ENCODE measurements at regions of chr1 and their contacts with region 1.

Region 1: DNA sequence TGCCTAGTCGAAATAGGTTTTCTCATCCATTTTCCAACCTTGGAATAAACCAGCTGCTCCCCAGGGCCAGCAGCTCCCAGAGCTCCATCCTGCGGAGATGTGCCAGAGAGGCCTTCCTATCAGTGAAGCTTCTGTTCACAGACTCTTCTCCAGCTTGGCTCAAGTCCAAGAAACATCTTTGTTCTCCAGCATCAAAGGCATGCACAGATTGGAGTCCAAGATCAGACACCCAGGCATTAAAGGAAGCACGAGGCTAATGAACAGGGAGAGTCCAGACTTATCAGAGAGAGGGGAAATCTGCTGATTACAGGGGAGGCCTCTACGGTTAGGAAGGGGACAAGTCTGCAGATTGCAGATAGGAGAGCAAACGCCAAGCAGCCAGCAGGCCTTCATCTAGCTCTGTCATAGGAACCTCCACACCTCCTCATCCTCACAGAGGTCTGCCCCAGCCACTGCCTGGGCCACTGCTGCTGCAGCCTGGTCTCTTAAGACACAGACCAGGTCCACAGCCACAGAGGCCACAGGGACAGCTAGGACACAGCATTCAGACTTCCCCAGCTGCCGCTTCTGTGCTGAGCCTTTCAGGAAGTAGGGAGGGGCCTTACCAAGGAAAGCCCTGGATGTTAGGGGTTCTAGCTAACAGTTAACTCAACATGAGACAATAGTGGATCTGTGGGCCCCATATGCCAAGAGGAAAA is 3.4 kb downstream of the PRR9 start:
- DNase-seq: no peak
- ATAC-seq: no peak
- H3K4me3 ChIP-seq: no peak overlapping the region
- H3K4me3 Mint-ChIP-seq: no peak overlapping the region
- H3K27ac ChIP-seq: no peak overlapping the region
- H3K27ac Mint-ChIP-seq: no peak overlapping the region
- H3K4me1 ChIP-seq: no peaks in the 10 kb centered on the region
- H3K4me1 Mint-ChIP-seq: no peaks in the 10 kb centered on the region
- H3K27me3 ChIP-seq: no peaks in the 10 kb centered on the region
- H3K27me3 Mint-ChIP-seq: peaks cover 22% of the 10 kb centered on the region
- CTCF ChIP-seq: no peak

Region 2: GRCh38 chr1:152654110-152654509 is 566.6 kb before region 1 on chr1:
- CTCF ChIA-PET with region 1: no interaction called
- POLR2A ChIA-PET with region 1: no interaction called
- intact Hi-C with region 1: loop called in 1 of 2 experiments (anchors 5 kb)
- DNase-seq: peak in 6 of 9 experiments; percentile 3 to 52 (median 29)
- ATAC-seq: no peak
- H3K4me3 ChIP-seq: no peak overlapping the region
- H3K4me3 Mint-ChIP-seq: no peak overlapping the region
- H3K27ac ChIP-seq: no peak overlapping the region
- H3K27ac Mint-ChIP-seq: no peak overlapping the region
- H3K4me1 ChIP-seq: no peaks in the 10 kb centered on the region
- H3K4me1 Mint-ChIP-seq: peaks cover 2% of the 10 kb centered on the region
- H3K27me3 ChIP-seq: peaks cover 0 to 2% of the 10 kb centered on the region in 2 experiments
- H3K27me3 Mint-ChIP-seq: peaks cover 14% of the 10 kb centered on the region
- CTCF ChIP-seq: peak; percentile 37

Region 3: DNA sequence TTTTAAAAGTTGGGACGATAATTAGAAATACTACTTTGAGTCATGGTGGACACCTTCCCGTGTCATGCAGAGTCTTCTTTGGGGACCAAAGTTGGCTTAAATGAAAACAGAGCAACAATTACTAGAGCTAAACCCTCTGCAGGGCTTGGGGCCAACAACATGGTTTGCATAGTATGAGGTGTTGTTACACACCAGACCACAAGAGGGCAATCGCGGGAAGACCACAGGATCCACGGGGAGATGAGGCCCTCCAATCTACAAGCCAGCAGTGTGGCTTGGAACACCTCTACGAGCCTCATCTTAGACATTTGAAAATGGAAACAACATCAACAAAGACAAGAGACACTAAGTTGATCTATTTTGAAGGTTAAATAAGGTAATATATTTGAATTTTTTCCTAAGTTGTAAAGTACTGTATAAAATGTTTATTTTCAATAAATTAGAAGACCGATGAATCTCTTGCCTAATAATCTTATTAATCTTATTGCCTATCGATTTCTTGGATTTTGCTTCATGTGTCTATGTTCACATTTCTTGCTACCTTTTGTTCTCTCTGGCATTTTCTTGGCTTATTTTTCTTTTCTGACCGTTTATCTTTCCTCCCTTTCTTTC is 350.8 kb before region 1 on chr1:
- CTCF ChIA-PET with region 1: interaction called, 3 read pairs
- POLR2A ChIA-PET with region 1: no interaction called
- intact Hi-C with region 1: loop called in 1 of 2 experiments (anchors 10 kb)
- DNase-seq: peak in 8 of 9 experiments; percentile 35 to 65 (median 47)
- ATAC-seq: peak; percentile 40
- H3K4me3 ChIP-seq: no peak overlapping the region
- H3K4me3 Mint-ChIP-seq: no peak overlapping the region
- H3K27ac ChIP-seq: no peak overlapping the region
- H3K27ac Mint-ChIP-seq: no peak overlapping the region
- H3K4me1 ChIP-seq: no peaks in the 10 kb centered on the region
- H3K4me1 Mint-ChIP-seq: no peaks in the 10 kb centered on the region
- H3K27me3 ChIP-seq: no peaks in the 10 kb centered on the region
- H3K27me3 Mint-ChIP-seq: peaks cover 5% of the 10 kb centered on the region
- CTCF ChIP-seq: peak; percentile 73

Region 4: DNA sequence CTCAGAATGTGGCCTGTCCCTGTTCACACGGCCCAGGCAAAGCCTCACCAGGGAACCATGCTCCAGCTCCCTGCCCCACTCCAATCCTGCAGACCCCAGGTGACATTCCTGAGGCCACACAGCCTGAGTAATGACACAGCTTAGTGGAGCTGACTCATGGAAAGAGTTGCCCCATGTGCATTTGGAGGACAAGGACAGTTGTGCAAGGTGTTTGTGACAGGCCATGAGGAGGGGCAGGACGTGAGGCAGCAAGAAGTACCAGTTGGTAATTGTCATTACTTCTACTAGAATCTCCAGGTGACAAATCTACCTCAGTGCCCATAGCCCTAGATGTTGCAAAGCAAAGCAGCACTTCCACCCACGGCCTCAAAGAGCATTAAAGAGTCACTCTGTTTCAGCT is 11.8 kb after region 1 on chr1:
- CTCF ChIA-PET with region 1: interaction called, 21 read pairs
- POLR2A ChIA-PET with region 1: no interaction called
- intact Hi-C with region 1: no loop called
- DNase-seq: no peak
- ATAC-seq: no peak
- H3K4me3 ChIP-seq: no peak overlapping the region
- H3K4me3 Mint-ChIP-seq: no peak overlapping the region
- H3K27ac ChIP-seq: no peak overlapping the region
- H3K27ac Mint-ChIP-seq: no peak overlapping the region
- H3K4me1 ChIP-seq: no peaks in the 10 kb centered on the region
- H3K4me1 Mint-ChIP-seq: no peaks in the 10 kb centered on the region
- H3K27me3 ChIP-seq: no peaks in the 10 kb centered on the region
- H3K27me3 Mint-ChIP-seq: peaks cover 16% of the 10 kb centered on the region
- CTCF ChIP-seq: no peak

Measured in CD8-positive, alpha-beta T cell (primary cell).